MCF 10A (cell line): ENCODE measurements at regions of chr10 and their contacts with region 1.

Region 1: DNA sequence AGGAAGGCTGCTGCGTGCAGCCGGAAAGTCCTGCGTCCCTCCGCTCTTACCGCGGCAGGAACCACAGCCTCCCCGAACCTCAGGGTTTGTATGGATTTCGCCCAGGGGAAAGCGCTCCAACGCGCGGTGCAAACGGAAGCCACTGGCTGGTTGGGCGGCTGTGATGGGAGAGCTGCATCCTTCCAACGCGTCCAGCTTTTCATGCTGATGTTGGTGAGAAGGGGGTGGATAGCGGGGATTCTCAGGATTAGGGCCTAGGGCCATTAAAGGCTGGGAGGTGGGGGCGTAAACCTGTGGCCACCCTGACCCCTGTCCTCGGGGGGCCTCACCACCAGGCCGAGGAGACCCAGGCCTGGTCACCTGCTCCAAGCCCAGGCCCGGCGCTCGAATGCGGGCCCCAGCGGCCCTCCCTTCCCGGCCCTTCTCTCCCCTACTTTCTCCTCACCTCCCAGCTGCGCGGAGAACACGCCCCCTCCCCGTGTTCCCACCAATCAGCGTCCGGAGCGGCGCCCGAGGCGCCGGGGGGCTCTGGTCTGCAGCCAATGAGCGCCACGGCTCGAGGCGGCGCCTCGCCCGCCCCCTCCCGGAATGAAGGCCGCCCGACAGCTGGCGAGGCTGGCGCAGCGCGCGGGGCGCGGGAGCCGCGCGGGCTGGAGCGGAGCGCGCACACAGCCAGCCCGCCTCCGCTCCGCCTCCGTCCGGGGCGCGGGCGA is 458 bp upstream of the NANOS1 start:
- DNase-seq: peak; percentile 72
- H3K4me3 Mint-ChIP-seq: peak overlapping the region; percentile 52
- H3K27ac Mint-ChIP-seq: no peak overlapping the region
- H3K4me1 Mint-ChIP-seq: peaks cover 38% of the 10 kb centered on the region
- H3K27me3 Mint-ChIP-seq: no peaks in the 10 kb centered on the region
- CTCF ChIP-seq: peak; percentile 8

Region 2: DNA sequence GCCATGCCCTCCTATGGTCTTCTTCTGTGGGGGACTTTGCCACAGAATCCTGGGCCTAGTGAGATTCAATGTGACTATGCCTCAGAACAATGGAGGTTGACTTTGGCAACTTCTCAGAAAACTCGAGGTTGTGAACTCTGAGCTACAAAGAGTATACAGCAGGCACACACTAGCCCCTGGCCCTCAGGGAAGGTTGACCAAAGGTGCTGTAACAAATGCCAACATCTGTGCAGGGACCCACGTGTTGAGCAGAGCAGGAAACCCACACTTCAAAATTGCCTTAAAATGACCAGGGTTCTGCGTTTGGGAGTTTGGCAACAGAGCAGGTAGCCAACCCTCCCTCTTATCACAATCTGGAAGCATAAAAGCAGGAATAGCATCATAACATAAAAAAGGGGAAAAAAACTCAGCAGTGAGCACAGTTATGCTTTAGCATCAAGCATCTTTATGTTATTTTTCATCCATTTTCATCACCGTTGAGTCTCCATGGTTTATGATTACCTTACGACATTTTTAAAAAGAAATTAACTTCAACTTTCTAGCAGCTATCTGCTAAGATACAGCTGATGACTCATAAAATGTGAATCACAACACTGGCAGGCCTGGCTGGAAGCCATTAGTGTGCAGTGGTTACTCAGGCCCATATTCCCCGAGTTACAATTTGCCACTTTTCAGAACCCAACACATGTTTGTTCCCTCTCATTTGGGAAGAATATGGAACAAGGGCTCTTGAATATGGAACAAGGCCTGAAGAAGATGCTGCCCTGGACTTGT is 444.7 kb before region 1 on chr10:
- CTCF ChIA-PET with region 1: no interaction called
- POLR2A ChIA-PET with region 1: no interaction called
- intact Hi-C with region 1: loop called (anchors 5 kb)
- DNase-seq: peak; percentile 89
- H3K4me3 Mint-ChIP-seq: no peak overlapping the region
- H3K27ac Mint-ChIP-seq: no peak overlapping the region
- H3K4me1 Mint-ChIP-seq: peaks cover 27% of the 10 kb centered on the region
- H3K27me3 Mint-ChIP-seq: no peaks in the 10 kb centered on the region
- CTCF ChIP-seq: no peak

Region 3: DNA sequence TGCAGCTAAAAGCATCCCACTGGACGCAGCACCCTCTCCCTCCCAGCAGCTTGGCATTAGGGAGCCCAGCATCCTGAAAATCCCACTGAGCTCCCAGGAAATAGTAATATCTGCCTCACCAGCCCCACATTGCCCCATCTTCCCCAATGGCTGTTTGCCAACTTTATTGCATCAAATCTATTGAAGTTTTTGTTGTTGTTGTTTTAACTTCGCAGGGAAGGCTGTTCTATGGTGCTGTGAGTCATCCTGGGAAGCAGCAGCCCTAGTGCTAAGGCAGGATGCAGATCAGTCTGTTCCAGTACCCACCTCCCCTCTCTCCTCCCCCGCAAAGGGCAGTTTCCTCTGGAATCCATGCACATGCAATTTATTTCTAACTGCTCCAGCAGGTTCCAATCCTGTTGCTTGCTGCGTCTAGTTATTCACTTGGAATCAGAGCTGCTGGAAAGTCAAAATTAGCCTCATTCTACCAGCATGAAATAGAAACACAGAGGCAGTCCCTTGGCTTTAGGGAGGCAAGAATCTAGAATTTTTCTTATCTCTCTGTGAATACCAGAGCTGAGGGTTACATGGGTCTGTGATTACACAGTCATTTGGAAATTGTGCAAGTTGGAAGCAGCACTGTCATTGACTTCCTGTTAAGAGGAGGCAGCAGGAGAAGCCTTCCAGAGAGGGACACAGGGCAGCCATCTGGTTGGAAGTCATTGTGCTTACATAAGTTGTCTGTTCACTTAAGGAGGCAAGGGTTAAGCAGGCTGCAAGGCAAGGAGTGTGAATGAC is 158.4 kb before region 1 on chr10:
- CTCF ChIA-PET with region 1: no interaction called
- POLR2A ChIA-PET with region 1: interaction called, 5 read pairs
- intact Hi-C with region 1: loop called (anchors 1 kb)
- DNase-seq: peak; percentile 99
- H3K4me3 Mint-ChIP-seq: peak overlapping the region; percentile 2
- H3K27ac Mint-ChIP-seq: peak overlapping the region; percentile 83
- H3K4me1 Mint-ChIP-seq: peaks cover 46% of the 10 kb centered on the region
- H3K27me3 Mint-ChIP-seq: no peaks in the 10 kb centered on the region
- CTCF ChIP-seq: no peak

Region 4: GRCh38 chr10:118958984-118959916 is 69.8 kb before region 1 on chr10:
- CTCF ChIA-PET with region 1: no interaction called
- POLR2A ChIA-PET with region 1: interaction called, 4 read pairs
- intact Hi-C with region 1: loop called (anchors 10 kb)
- DNase-seq: peak; percentile 86
- H3K4me3 Mint-ChIP-seq: no peak overlapping the region
- H3K27ac Mint-ChIP-seq: no peak overlapping the region
- H3K4me1 Mint-ChIP-seq: peaks cover 28% of the 10 kb centered on the region
- H3K27me3 Mint-ChIP-seq: no peaks in the 10 kb centered on the region
- CTCF ChIP-seq: no peak

Region 5: DNA sequence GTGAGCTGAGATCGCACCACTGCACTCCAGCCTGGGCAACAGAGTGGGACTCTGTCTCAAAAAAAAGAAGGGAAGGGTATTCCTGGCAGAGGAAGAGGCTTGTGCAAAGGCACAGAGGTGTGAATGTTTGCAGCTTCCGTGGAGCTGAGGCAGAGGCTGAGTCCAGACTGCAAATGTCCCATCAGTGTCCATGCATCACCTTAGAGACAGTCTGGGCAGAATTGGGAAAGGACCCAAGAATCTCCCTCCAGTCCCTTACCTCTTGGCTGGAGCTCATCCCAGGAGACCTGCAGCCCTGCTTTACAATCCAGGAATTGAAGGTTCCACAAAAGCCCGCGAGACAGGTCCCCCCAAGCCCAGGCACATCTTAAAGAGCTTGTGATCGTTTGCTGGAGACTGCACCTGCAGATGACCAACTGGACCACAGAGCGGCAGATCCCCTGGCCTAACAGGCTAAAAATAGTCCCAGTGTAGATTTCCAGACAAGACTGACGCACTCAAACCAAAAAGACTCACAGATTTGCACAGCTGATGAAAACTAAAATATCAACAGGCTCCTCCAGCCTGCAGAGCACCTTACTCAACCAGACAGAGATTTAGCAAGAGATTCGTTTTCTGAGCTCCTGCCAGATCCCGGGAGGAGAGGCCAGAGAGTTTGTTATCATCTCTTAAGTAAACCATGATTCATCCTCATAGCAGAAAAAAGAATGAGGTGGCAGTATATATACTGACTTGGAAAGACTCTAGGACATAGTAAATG is 22.4 kb before region 1 on chr10:
- CTCF ChIA-PET with region 1: interaction called, 3 read pairs
- POLR2A ChIA-PET with region 1: interaction called, 83 read pairs
- intact Hi-C with region 1: loop called (anchors 2 kb)
- DNase-seq: peak; percentile 98
- H3K4me3 Mint-ChIP-seq: no peak overlapping the region
- H3K27ac Mint-ChIP-seq: peak overlapping the region; percentile 46
- H3K4me1 Mint-ChIP-seq: peaks cover 30% of the 10 kb centered on the region
- H3K27me3 Mint-ChIP-seq: no peaks in the 10 kb centered on the region
- CTCF ChIP-seq: no peak